ENCODE measurements at regions of chr9 and their contacts with region 1.

Region 1: GRCh38 chr9:9483175-9483574 is 1129.6 kb downstream of the PTPRD start:
- DNase-seq: no peak

Region 2: GRCh38 chr9:8053530-8053929 is 1429.6 kb before region 1 on chr9:
- intact Hi-C with region 1: loop called in 1 of 2 experiments (anchors 5 kb)
- DNase-seq: no peak

Region 3: DNA sequence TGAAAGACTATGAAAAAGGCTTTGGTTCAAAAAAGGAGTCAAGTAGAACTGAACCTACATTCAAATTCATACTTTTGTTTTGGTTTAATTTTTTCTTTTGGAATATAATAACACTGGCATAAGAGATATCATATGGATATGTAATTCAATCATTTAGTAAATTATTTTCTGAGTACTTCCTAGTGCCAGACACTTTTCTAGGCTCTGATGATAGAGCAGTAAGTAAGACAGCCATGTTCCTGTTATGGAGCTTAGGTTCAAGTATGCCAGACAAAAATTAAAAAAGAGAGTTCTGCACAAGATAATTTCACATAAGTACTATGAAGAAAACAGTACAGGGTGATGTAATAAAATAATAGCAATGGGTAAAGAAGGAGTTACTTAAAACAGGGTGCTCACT is 55.6 kb after region 1 on chr9:
- intact Hi-C with region 1: no loop called
- DNase-seq: no peak